ENCODE measurements at regions of chr4 and their contacts with region 1.

Region 1: DNA sequence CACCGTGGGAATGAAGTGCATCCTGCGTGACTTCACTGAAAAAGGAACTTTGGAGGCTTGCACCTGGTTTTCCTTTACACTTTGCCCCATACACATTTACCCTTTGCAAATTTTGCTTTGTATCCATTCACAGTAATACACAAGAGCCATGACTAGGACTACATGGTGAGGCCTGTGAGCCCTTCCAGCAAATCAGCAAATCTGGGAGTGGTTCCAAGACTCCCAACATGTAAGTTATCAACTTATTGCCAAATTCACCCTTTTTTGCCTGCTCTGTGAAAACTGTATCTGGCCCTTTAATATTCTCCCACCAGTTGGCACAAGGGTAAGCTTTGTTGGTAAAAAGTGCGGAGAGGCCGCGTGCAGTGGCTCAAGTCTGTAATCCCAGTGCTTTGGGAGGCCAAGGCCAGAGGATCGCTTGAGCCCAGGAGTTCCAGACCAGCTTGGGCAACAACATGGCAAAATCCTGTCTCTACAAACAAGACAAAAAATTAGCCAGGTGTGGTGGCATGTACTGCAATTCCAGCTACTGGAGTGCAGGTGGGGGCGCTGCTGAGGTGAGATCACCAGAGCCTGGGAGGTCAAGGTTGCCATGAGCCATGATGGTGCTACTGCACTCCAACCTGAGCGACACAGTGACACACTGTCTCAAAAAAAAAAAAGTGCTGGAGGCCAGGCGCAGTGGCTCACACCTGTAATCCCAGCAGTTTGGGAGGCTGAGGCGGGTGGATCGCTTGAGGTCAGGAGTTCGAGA is 5.0 kb downstream of the PRMT9 start:
- DNase-seq: no peak
- H3K4me3 ChIP-seq: no peak overlapping the region
- H3K27ac ChIP-seq: no peak overlapping the region
- H3K4me1 ChIP-seq: peaks cover 0 to 12% (median 0%) of the 10 kb centered on the region in 4 donors
- H3K27me3 ChIP-seq: no peaks in the 10 kb centered on the region
- CTCF ChIP-seq: no peak

Region 2: GRCh38 chr4:147480891-147481576 is 197.9 kb before region 1 on chr4 and contains the start of gene EDNRA:
- intact Hi-C with region 1: no loop called
- DNase-seq: peak in 1 of 2 donors; percentile 73
- H3K4me3 ChIP-seq: peak within 1 kb of the TSS; percentile 56 to 70
- H3K27ac ChIP-seq: peak within 1 kb of the TSS; percentile 79 to 92
- H3K4me1 ChIP-seq: peaks cover 0 to 44% (median 19%) of the 10 kb centered on the region in 4 donors
- H3K27me3 ChIP-seq: no peaks in the 10 kb centered on the region
- CTCF ChIP-seq: no peak

Region 3: GRCh38 chr4:147629783-147630730 is 48.9 kb before region 1 on chr4:
- intact Hi-C with region 1: loop called (anchors 10 kb)
- DNase-seq: no peak
- H3K4me3 ChIP-seq: no peak overlapping the region
- H3K27ac ChIP-seq: no peak overlapping the region
- H3K4me1 ChIP-seq: peaks cover 0 to 4% (median 0%) of the 10 kb centered on the region in 4 donors
- H3K27me3 ChIP-seq: no peaks in the 10 kb centered on the region
- CTCF ChIP-seq: no peak

Region 4: DNA sequence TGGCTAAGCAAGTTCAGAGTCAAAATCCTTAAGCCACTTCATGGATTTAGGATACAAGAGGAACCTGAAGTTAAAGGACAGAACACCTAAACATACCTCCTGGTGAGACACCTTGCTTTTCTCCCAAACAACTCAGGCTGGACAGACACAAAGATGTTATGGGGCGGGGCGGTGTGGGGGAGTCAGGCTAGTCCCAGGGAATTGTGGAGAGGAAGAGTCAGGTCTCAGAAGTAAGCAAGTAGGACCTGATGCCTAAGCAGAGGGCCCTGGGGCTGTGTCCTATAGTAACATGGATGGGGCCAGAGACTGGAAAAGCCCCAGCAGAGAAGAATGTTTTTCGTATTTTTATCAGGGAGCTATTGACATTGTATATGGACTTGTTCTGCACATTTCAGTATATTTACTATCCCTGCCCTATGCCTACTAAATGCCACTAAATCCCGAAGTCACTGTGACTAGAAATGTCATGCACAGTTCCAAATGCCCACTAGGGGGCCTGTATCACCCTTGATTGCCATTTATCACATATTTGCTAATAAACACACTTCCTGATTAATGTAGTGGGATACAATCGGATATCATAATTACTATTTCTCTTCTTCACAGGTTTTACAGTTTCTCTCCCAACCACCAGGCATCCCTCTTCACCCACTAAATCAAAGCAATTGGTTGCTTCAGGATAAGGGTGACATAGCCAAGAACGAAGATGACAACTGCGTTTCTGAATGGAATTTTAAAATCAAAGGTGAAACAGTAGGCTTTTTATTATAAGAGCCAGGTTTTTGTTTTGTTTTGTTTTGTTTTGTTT is 29.1 kb after region 1 on chr4:
- intact Hi-C with region 1: no loop called
- DNase-seq: peak in 1 of 2 donors; percentile 66
- H3K4me3 ChIP-seq: no peak overlapping the region
- H3K27ac ChIP-seq: no peak overlapping the region
- H3K4me1 ChIP-seq: peaks cover 0 to 8% (median 0%) of the 10 kb centered on the region in 4 donors
- H3K27me3 ChIP-seq: no peaks in the 10 kb centered on the region
- CTCF ChIP-seq: peak; percentile 84 to 91